CD8-positive, alpha-beta T cell (primary cell): ENCODE measurements at regions of chr6 and their contacts with region 1.

Region 1: DNA sequence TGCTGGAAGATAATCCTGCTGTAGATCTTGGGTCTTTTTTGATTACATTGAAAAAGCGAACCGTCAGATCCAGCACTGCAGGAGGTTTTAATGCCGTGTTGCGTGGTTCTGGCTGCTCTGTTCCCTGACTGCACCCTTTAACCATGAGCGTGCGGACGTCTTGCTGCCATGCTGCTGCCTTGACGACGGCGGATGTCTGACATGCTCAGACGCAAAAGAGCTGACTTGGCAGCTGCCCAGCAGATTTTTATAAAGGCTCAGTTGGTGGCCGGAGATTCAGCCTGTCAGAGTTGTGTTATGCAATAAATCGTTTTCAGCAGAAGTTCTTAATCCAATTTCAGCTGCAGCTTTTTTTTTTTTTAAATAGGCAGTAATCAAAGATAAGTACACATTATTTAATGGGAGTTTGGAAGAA is 119.4 kb downstream of the JARID2 start:
- DNase-seq: peak; percentile 13 to 82 (median 60)
- ATAC-seq: peak; percentile 88
- H3K4me3 ChIP-seq: no peak overlapping the region
- H3K4me3 Mint-ChIP-seq: peak overlapping the region; percentile 47
- H3K27ac ChIP-seq: no peak overlapping the region
- H3K27ac Mint-ChIP-seq: no peak overlapping the region
- H3K4me1 ChIP-seq: peaks cover 45% of the 10 kb centered on the region
- H3K4me1 Mint-ChIP-seq: peaks cover 51% of the 10 kb centered on the region
- H3K27me3 ChIP-seq: no peaks in the 10 kb centered on the region
- H3K27me3 Mint-ChIP-seq: no peaks in the 10 kb centered on the region
- CTCF ChIP-seq: no peak

Region 2: GRCh38 chr6:15346315-15346714 is 19.0 kb before region 1 on chr6:
- CTCF ChIA-PET with region 1: interaction called, 3 read pairs
- POLR2A ChIA-PET with region 1: no interaction called
- intact Hi-C with region 1: loop called in 1 of 2 experiments (anchors 2 kb)
- DNase-seq: peak in 1 of 9 experiments; percentile 38
- ATAC-seq: no peak
- H3K4me3 ChIP-seq: no peak overlapping the region
- H3K4me3 Mint-ChIP-seq: peak overlapping the region; percentile 17
- H3K27ac ChIP-seq: no peak overlapping the region
- H3K27ac Mint-ChIP-seq: peak overlapping the region; percentile 25
- H3K4me1 ChIP-seq: peaks cover 79% of the 10 kb centered on the region
- H3K4me1 Mint-ChIP-seq: peaks cover 83% of the 10 kb centered on the region
- H3K27me3 ChIP-seq: no peaks in the 10 kb centered on the region
- H3K27me3 Mint-ChIP-seq: no peaks in the 10 kb centered on the region
- CTCF ChIP-seq: no peak